Colonic mucosa (tissue), 4 donors: ENCODE measurements at regions of chr16 and their contacts with region 1.

Region 1: DNA sequence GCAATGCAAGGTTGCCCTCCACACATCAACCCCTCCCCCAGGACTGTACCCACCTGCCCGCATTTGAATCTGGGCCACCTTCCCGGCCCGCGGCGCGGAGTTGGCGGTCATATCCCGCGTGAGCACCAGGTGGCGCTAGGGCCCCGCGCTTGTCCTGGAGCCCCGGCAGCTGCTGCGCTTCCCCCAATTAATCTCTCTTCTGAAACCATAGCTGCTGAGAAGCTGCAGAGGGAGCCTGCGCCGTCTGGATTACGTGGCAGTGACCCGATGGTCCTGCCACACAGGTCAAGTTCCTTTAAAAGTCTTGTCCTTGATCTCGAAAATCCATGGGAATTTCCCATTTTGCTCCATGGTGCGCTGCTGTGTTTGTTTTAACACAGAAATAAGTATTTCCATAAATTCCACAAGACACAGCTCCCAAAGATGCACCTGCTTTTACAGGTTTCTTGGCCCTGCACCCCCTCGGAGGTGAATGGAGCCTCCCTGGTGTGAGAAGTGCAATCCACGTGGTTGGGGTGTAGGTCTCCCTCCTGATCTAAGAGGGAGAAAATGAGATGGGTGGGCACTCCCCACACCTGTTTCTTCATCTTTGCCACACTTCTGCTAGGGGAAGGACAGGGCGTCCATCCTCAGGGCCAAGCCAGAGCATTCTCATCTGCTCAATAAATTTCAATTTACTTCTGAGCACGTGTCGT is 22.1 kb downstream of the COX4I1 start:
- DNase-seq: peak; percentile 81
- H3K4me3 ChIP-seq: no peak overlapping the region
- H3K27ac ChIP-seq: no peak overlapping the region
- H3K4me1 ChIP-seq: peaks cover 9% of the 10 kb centered on the region
- H3K27me3 ChIP-seq: no peaks in the 10 kb centered on the region
- CTCF ChIP-seq: peak; percentile 95

Region 2: GRCh38 chr16:85898521-85899442 is 77.2 kb after region 1 on chr16 and contains the start of gene IRF8:
- intact Hi-C with region 1: loop called (anchors 5 kb)
- DNase-seq: peak; percentile 88
- H3K4me3 ChIP-seq: peak within 1 kb of the TSS; percentile 79
- H3K27ac ChIP-seq: peak within 1 kb of the TSS; percentile 80
- H3K4me1 ChIP-seq: peaks cover 13% of the 10 kb centered on the region
- H3K27me3 ChIP-seq: no peaks in the 10 kb centered on the region
- CTCF ChIP-seq: no peak
- total RNA-seq, gene IRF8: 25.1 to 52.5 TPM

Region 3: DNA sequence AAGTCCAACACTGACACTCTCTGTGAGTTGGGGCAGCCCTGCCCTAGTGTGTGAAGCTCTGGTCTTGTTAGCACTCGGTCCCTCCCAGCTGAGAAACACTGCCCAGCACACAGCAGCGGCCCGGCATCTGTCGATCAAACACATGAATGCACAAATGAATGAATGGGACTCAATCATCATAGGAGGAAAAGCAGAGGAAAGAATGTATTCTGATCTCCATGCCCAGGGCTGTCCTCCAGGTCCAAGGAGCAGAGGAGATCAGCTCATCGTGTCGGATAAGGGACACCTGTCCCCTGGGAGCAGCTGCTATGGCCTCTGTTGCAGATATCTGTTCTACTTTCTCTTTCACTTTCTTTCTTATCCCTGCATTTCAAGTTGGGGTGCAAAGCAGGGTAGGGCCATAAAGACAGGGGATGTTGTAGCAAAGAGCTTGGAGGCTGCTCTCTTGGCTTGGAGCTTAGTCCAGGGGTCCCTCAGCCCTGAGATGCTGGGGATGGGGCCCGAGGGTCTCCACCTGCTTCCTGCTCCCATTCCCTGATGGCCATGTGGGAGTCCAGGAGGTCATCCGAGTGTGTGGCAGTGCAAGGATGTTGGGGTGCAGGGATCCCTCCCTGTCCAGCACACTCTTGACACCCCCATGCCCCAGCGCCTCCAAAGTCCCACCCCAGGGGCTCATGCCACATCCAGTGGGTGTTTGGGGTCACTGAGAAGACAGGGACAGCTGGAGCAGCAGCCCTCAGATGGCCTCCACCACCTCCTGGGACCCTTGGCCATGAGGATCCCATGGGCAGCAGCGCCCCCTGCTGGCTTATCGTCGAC is 165.6 kb after region 1 on chr16:
- intact Hi-C with region 1: loop called (anchors 1 kb)
- DNase-seq: peak; percentile 49
- H3K4me3 ChIP-seq: no peak overlapping the region
- H3K27ac ChIP-seq: peak overlapping the region; percentile 76
- H3K4me1 ChIP-seq: peaks cover 17% of the 10 kb centered on the region
- H3K27me3 ChIP-seq: no peaks in the 10 kb centered on the region
- CTCF ChIP-seq: peak; percentile 41

Region 4: GRCh38 chr16:86016201-86016871 is 194.7 kb after region 1 on chr16:
- intact Hi-C with region 1: loop called (anchors 1 kb)
- DNase-seq: peak; percentile 48
- H3K4me3 ChIP-seq: no peak overlapping the region
- H3K27ac ChIP-seq: no peak overlapping the region
- H3K4me1 ChIP-seq: no peaks in the 10 kb centered on the region
- H3K27me3 ChIP-seq: no peaks in the 10 kb centered on the region
- CTCF ChIP-seq: peak; percentile 78

Region 5: GRCh38 chr16:86519649-86520316 is 698.2 kb after region 1 on chr16:
- intact Hi-C with region 1: loop called (anchors 10 kb)
- DNase-seq: peak; percentile 57
- H3K4me3 ChIP-seq: no peak overlapping the region
- H3K27ac ChIP-seq: peak overlapping the region; percentile 18
- H3K4me1 ChIP-seq: no peaks in the 10 kb centered on the region
- H3K27me3 ChIP-seq: peaks cover 30% of the 10 kb centered on the region
- CTCF ChIP-seq: peak; percentile 90